HepG2 (cell line): ENCODE measurements at regions of chrX and their contacts with region 1.

Region 1: DNA sequence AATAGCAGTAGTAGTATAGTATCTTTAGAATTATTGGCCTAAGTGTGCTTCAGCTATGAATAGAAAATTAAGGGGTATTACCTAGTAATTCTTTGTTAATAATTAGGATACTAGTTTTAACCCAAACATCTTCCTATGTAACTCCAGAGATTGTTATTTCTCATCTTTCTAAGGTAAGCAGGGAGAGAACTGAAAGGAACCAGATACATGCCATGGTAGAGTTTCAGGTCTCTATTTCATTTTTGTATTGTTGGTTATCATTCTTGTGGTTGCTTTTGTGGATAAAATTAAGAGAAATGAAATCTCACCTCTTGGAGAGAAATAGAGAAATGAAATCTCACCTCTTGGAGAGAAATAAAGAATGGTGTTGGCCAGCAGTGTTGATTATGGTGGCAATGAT is 597.1 kb upstream of the CT83 start:
- DNase-seq: no peak
- ATAC-seq: no peak
- H3K4me3 ChIP-seq: no peak overlapping the region
- H3K27ac ChIP-seq: no peak overlapping the region
- H3K4me1 ChIP-seq: no peaks in the 10 kb centered on the region
- H3K27me3 ChIP-seq: no peaks in the 10 kb centered on the region
- CTCF ChIP-seq: no peak
- EP300 ChIP-seq: no peak
- POLR2A ChIP-seq: no peak
- RAD21 ChIP-seq: no peak

Region 2: DNA sequence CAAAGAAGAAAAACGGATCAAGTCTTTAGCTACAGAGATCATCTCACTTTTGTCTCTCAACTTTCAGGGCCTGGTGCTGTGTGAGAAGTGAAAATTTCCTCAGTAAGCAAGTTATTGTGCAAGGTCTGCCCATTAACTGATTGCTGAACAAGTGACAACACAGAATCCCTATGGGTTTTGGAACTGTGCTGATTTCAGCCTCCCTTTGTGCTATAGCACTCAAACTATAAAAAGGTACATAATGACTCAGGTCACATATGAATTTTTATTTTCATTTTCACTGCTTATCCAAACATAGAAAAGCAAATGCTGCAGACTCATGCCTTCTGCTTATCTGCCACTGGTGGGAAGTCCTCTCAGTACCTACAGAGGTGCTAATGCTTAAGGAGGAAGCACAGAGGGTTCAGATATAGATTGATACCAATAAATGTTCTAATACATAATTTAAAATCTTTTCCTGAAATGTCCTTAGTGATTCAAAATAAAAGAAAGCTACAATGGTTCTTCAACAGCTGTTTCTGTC is 20.9 kb before region 1 on chrX:
- CTCF ChIA-PET with region 1: no interaction called
- POLR2A ChIA-PET with region 1: no interaction called
- in situ Hi-C with region 1: no loop called
- intact Hi-C with region 1: no loop called
- DNase-seq: no peak
- ATAC-seq: no peak
- H3K4me3 ChIP-seq: no peak overlapping the region
- H3K27ac ChIP-seq: no peak overlapping the region
- H3K4me1 ChIP-seq: no peaks in the 10 kb centered on the region
- H3K27me3 ChIP-seq: no peaks in the 10 kb centered on the region
- CTCF ChIP-seq: no peak
- EP300 ChIP-seq: no peak
- POLR2A ChIP-seq: no peak
- RAD21 ChIP-seq: no peak

Region 3: DNA sequence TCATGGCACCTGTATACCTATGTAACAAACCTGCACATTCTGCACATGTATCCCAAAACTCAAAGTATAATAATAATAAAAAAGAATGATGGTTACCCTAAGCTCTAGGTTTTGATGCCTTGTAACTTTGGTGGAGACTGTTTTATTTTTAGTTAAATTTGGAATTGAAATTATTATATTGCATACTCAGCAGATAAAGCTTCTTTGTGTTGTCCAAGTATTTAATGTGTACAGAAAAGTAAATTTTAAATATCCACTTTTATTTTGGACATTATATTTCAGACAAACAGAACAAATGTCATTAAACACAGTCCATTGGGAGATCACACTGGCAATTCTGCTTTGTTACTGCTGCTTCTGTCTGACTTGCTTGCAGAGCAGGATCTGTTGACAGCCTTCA is 87.4 kb after region 1 on chrX:
- CTCF ChIA-PET with region 1: no interaction called
- POLR2A ChIA-PET with region 1: no interaction called
- in situ Hi-C with region 1: no loop called
- intact Hi-C with region 1: no loop called
- DNase-seq: no peak
- ATAC-seq: no peak
- H3K4me3 ChIP-seq: no peak overlapping the region
- H3K27ac ChIP-seq: no peak overlapping the region
- H3K4me1 ChIP-seq: no peaks in the 10 kb centered on the region
- H3K27me3 ChIP-seq: no peaks in the 10 kb centered on the region
- CTCF ChIP-seq: no peak
- EP300 ChIP-seq: no peak
- POLR2A ChIP-seq: no peak
- RAD21 ChIP-seq: no peak

Region 4: DNA sequence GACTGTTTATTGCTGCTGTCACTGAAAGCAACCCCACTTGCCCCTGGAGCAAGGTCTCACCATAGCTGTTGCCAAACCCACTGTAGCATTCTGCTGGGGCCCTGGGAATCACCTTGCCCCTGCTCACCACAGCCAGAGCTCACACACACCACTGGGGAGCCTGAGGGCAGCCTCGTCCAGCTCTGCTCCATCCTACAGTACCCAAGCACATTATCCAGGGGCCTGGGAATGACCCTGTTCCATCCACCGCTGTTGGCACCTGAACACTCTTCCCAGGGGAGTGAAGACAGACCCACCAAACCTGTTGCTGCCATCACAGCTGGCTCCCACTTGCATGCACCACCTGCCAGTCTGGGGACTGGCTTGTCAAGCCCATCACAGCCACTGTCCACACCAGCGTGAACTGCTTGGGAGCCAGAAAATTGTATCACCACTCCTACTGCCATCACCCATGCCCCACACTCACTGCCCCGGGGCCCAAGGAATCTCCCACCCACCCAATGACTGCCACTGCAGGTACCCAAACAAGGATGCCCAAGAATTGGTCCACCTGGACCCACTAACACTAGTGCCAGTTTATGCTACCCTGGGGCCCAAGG is 245.4 kb after region 1 on chrX:
- CTCF ChIA-PET with region 1: no interaction called
- POLR2A ChIA-PET with region 1: no interaction called
- in situ Hi-C with region 1: no loop called
- intact Hi-C with region 1: loop called (anchors 10 kb)
- DNase-seq: no peak
- ATAC-seq: no peak
- H3K4me3 ChIP-seq: no peak overlapping the region
- H3K27ac ChIP-seq: no peak overlapping the region
- H3K4me1 ChIP-seq: no peaks in the 10 kb centered on the region
- H3K27me3 ChIP-seq: no peaks in the 10 kb centered on the region
- CTCF ChIP-seq: no peak
- EP300 ChIP-seq: no peak
- POLR2A ChIP-seq: no peak
- RAD21 ChIP-seq: no peak